Mammary epithelial cell (primary cell): ENCODE measurements at regions of chr22 and their contacts with region 1.

Region 1: DNA sequence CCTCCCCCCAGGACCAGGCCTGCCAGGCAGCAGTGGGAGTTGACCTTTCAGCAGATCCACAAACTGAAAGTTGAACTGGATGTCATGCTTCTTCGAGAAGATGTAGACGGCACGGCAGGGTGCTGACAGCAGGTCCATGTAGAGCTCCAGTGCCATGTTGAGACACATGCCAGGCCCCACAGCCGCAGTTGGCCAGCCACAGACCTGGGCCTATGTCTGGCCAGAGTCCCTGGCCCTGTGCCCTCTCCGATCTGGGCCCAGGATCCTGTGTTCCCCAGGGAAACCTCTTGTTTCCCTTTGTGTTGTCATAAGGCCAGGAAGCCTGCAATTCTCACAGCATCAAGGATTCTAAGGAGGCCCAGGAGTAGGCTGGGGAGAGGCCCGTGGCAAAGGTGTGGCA is at the start of gene GSTT4:
- DNase-seq: no peak
- H3K4me3 ChIP-seq: no peak within 1 kb of the TSS
- H3K27ac ChIP-seq: no peak within 1 kb of the TSS
- H3K4me1 ChIP-seq: no peaks in the 10 kb centered on the region
- H3K27me3 ChIP-seq: no peaks in the 10 kb centered on the region
- CTCF ChIP-seq: no peak
- total RNA-seq, gene GSTT4: not detected

Region 2: GRCh38 chr22:23632178-23632577 is 373.0 kb before region 1 on chr22 and contains the start of gene DRICH1:
- CTCF ChIA-PET with region 1: no interaction called
- dilution Hi-C with region 1: no loop called
- in situ Hi-C with region 1: no loop called
- intact Hi-C with region 1: no loop called
- DNase-seq: no peak
- H3K4me3 ChIP-seq: no peak within 1 kb of the TSS
- H3K27ac ChIP-seq: no peak within 1 kb of the TSS
- H3K4me1 ChIP-seq: no peaks in the 10 kb centered on the region
- H3K27me3 ChIP-seq: no peaks in the 10 kb centered on the region
- CTCF ChIP-seq: no peak
- total RNA-seq, gene DRICH1: 0.17 to 0.24 TPM

Region 3: DNA sequence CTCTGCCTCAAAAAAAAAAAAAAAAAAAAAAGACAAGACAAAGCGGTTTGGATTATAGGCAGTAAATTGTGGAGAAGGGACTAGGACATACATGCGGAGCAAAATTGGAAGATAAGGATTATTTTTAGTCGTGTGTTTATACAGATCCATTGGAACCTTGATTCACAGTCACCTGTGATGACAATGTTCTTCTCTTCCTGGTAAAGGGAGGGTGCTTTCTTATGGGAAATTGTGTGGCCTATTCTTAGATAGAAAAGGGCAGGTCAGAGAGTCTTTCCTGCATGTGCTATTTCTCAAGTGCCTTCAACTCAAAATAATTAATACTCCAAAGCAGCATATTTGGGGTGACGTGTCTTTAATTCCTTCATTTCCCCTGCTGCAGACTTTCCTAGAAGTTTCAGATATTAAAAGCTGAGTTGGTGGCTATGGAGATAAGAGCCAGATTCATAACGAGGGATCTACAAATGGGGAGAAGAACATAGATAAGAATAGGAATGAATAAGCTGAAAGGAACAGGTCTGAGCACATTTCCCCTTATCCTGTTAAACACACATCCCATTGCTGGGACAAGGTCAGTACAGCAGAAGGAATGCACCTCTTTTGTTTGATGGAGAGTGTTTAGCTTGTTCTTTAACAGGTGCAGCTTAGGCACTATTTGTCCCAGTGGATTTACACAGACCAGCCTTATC is 66.7 kb before region 1 on chr22:
- CTCF ChIA-PET with region 1: no interaction called
- dilution Hi-C with region 1: loop called (anchors 10 kb)
- in situ Hi-C with region 1: loop called in 1 of 2 experiments (anchors 10 kb)
- intact Hi-C with region 1: no loop called
- DNase-seq: no peak
- H3K4me3 ChIP-seq: no peak overlapping the region
- H3K27ac ChIP-seq: no peak overlapping the region
- H3K4me1 ChIP-seq: no peaks in the 10 kb centered on the region
- H3K27me3 ChIP-seq: no peaks in the 10 kb centered on the region
- CTCF ChIP-seq: no peak

Region 4: GRCh38 chr22:24156913-24157821 is 152.0 kb after region 1 on chr22:
- CTCF ChIA-PET with region 1: no interaction called
- dilution Hi-C with region 1: loop called (anchors 10 kb)
- in situ Hi-C with region 1: no loop called
- intact Hi-C with region 1: no loop called
- DNase-seq: peak; percentile 74
- H3K4me3 ChIP-seq: peak overlapping the region in 2 of 3 experiments; percentile 34 to 50
- H3K27ac ChIP-seq: no peak overlapping the region
- H3K4me1 ChIP-seq: peaks cover 30% of the 10 kb centered on the region
- H3K27me3 ChIP-seq: no peaks in the 10 kb centered on the region
- CTCF ChIP-seq: peak; percentile 76 to 81

Region 5: DNA sequence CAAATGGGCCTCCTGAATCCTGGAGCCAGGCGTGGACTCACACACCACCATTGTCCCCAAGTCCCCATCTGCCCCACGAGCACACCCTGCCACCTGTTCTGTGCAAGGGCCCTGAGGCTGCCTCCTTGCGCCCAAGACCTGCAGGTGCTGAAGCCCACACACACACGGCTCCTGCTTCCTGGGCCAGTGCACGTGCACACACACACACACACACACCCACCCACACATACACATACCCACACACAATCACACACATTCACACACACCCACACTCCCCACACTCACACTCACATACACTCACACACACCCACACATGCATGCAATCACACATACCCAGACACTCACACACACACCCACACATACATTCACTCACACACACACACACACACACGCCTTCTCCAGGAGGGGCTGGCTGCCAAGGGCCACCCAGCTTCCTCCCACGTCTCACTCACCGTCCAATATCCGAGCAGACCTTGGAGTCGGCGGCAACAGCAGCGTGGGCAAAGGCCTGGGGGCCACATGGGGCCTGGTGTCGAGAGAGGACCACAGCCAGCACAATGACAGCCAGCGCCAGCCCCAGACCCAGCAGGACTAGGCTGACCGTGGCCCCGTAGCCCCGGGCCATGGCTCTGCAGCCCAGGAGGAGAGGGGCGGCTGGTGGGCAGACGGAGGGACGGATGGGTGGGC is 239.0 kb after region 1 on chr22:
- CTCF ChIA-PET with region 1: no interaction called
- dilution Hi-C with region 1: loop called (anchors 10 kb)
- in situ Hi-C with region 1: no loop called
- intact Hi-C with region 1: no loop called
- DNase-seq: no peak
- H3K4me3 ChIP-seq: no peak overlapping the region
- H3K27ac ChIP-seq: no peak overlapping the region
- H3K4me1 ChIP-seq: peaks cover 21% of the 10 kb centered on the region
- H3K27me3 ChIP-seq: no peaks in the 10 kb centered on the region
- CTCF ChIP-seq: no peak